Left colon (tissue), 2 donors: ENCODE measurements at regions of chr4 and their contacts with region 1.

Region 1: GRCh38 chr4:8468746-8469535 is 28.4 kb downstream of the TRMT44 start:
- DNase-seq: peak; percentile 48 to 55
- ATAC-seq: peak; percentile 79

Region 2: DNA sequence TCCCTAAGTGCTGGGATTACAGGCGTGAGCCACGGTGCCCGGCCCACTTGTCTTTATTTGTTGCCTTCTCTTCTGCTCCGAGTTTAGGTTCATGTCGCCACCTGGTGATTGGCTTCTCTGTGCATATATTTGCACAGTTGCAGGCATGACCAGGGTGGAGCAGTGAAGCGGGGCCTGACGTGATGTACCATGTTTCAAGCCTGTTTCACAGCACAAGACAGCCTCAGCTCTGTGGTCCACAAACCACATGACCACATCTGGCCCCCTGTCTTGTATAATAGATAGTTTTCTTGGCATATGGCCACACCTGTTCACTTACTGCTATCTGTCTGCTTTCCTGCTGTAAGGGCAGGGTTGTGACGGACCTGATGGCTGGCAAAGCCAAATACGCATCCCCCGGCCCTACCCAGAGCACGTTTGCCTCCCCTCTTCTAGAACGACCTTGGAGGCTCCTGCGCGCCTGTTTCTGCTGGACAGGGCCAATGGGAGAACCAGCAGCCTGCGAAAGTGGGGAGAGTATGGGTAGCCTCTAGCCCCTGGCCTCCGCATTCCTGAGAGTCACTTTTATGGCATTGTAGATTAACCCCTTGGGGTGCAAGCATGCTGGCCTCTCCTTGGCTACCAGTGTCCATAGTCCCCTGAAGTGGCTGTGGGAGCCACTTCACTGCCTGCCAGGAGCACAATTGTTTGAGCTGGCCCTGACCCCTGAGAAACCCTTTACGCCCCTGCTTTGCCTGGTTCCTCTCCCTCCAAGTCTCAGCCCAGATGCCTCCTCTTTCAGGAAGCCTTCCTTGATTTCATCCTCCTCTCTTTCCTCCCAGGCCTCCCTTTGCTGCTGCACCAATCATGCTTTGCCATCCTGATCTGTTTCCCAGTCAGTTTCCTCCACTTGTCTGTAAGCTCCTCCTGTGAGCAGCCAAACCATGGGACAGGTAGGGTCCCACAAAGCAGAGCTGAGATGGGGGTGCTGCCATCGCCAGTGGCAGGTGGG is 275.9 kb before region 1 on chr4:
- intact Hi-C with region 1: no loop called
- DNase-seq: peak; percentile 73 to 81
- ATAC-seq: peak; percentile 76

Region 3: GRCh38 chr4:8547108-8547970 is 78.4 kb after region 1 on chr4:
- intact Hi-C with region 1: loop called in 1 of 2 experiments (anchors 10 kb)
- DNase-seq: peak in 1 of 2 donors; percentile 5
- ATAC-seq: peak; percentile 44

Region 4: GRCh38 chr4:8594097-8595038 is 125.4 kb after region 1 on chr4:
- intact Hi-C with region 1: loop called (anchors 5 to 10 kb)
- DNase-seq: peak in 1 of 2 donors; percentile 47
- ATAC-seq: peak; percentile 73

Region 5: GRCh38 chr4:8904666-8905065 is 435.7 kb after region 1 on chr4:
- intact Hi-C with region 1: no loop called
- DNase-seq: no peak
- ATAC-seq: no peak